ENCODE measurements at regions of chr18 and their contacts with region 1.

Region 1: GRCh38 chr18:72762515-72763122 is 105.2 kb downstream of the NETO1 start:
- DNase-seq: peak in 2 of 9 experiments; percentile 4 to 42
- ATAC-seq: no peak
- H3K4me3 ChIP-seq: no peak overlapping the region
- H3K4me3 Mint-ChIP-seq: no peak overlapping the region
- H3K27ac ChIP-seq: no peak overlapping the region
- H3K27ac Mint-ChIP-seq: no peak overlapping the region
- H3K4me1 ChIP-seq: no peaks in the 10 kb centered on the region
- H3K4me1 Mint-ChIP-seq: no peaks in the 10 kb centered on the region
- H3K27me3 ChIP-seq: no peaks in the 10 kb centered on the region
- H3K27me3 Mint-ChIP-seq: no peaks in the 10 kb centered on the region
- CTCF ChIP-seq: peak; percentile 64

Region 2: GRCh38 chr18:72436401-72436800 is 326.2 kb before region 1 on chr18:
- CTCF ChIA-PET with region 1: no interaction called
- POLR2A ChIA-PET with region 1: no interaction called
- intact Hi-C with region 1: no loop called
- DNase-seq: no peak
- ATAC-seq: no peak
- H3K4me3 ChIP-seq: no peak overlapping the region
- H3K4me3 Mint-ChIP-seq: no peak overlapping the region
- H3K27ac ChIP-seq: no peak overlapping the region
- H3K27ac Mint-ChIP-seq: no peak overlapping the region
- H3K4me1 ChIP-seq: no peaks in the 10 kb centered on the region
- H3K4me1 Mint-ChIP-seq: no peaks in the 10 kb centered on the region
- H3K27me3 ChIP-seq: no peaks in the 10 kb centered on the region
- H3K27me3 Mint-ChIP-seq: no peaks in the 10 kb centered on the region
- CTCF ChIP-seq: no peak

Region 3: DNA sequence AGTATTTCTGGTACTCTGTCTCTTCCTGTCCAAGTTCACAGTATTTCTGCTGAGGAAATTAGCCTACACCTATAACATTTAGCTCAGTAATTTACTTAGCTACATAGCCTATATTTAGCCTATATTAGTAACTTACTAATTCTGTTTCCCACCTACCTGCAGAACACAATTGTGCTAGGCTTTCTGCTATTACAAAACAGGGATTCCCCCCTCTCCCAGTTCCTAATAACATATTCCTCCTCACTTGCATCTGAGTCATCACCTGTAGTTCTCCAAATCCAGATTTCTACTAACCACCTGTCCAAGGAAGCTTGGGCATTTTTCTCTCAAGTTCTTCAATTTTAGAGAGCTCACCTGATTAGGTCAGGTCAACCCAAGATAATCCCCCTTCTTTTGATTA is 10.3 kb after region 1 on chr18:
- CTCF ChIA-PET with region 1: no interaction called
- POLR2A ChIA-PET with region 1: no interaction called
- intact Hi-C with region 1: no loop called
- DNase-seq: no peak
- ATAC-seq: no peak
- H3K4me3 ChIP-seq: no peak overlapping the region
- H3K4me3 Mint-ChIP-seq: no peak overlapping the region
- H3K27ac ChIP-seq: no peak overlapping the region
- H3K27ac Mint-ChIP-seq: no peak overlapping the region
- H3K4me1 ChIP-seq: no peaks in the 10 kb centered on the region
- H3K4me1 Mint-ChIP-seq: no peaks in the 10 kb centered on the region
- H3K27me3 ChIP-seq: no peaks in the 10 kb centered on the region
- H3K27me3 Mint-ChIP-seq: no peaks in the 10 kb centered on the region
- CTCF ChIP-seq: no peak

Region 4: GRCh38 chr18:73842795-73843394 is 1080.3 kb after region 1 on chr18:
- CTCF ChIA-PET with region 1: interaction called, 7 read pairs
- POLR2A ChIA-PET with region 1: no interaction called
- intact Hi-C with region 1: loop called in 1 of 2 experiments (anchors 2 kb)
- DNase-seq: peak in 7 of 9 experiments; percentile 7 to 56 (median 30)
- ATAC-seq: peak; percentile 49
- H3K4me3 ChIP-seq: no peak overlapping the region
- H3K4me3 Mint-ChIP-seq: peak overlapping the region; percentile 78
- H3K27ac ChIP-seq: no peak overlapping the region
- H3K27ac Mint-ChIP-seq: no peak overlapping the region
- H3K4me1 ChIP-seq: no peaks in the 10 kb centered on the region
- H3K4me1 Mint-ChIP-seq: peaks cover 7% of the 10 kb centered on the region
- H3K27me3 ChIP-seq: no peaks in the 10 kb centered on the region
- H3K27me3 Mint-ChIP-seq: peaks cover 2% of the 10 kb centered on the region
- CTCF ChIP-seq: peak; percentile 94

Region 5: DNA sequence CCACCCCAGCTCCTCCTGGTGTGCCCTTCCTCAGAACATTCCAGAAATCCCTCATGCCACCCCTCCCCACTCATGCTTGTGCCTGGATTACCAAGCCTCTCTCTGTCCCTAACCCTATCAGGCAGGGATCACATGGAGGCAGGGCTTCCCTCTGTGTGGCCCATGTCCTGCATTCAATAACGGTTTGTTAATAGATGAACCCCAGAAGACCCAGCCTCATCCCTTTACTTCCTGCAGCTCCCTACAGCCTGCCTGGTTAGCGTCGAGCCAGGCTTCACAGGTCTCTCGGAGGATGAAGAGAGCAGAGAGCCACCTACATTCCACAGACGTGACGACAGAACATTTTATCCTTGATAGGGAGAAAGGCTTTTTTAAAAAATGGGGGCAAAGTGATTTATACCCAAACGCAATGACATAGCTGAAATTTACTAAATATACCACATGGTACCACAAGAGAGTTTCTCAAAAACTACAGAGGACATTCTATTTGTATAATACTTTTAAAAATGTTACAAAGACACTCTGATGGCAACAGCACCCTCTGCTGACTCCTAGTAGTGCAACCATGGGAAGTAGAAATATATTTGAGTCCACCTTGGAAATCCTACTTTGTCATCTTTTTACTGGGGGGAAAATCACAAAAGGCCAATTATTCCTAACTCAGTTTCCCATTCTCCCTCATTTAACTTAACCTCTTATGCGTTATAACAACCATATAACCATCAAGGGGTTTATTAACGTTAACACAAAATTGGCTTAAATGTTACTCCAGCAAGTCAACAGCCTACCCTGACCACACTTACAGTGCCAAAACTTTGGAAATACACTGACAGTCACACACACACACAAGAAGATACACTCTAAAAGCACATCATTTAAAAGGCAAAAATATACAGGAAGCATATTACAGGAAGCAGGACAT is 1354.3 kb after region 1 on chr18:
- CTCF ChIA-PET with region 1: no interaction called
- POLR2A ChIA-PET with region 1: no interaction called
- intact Hi-C with region 1: loop called (anchors 10 kb)
- DNase-seq: peak in 4 of 9 experiments; percentile 14 to 48 (median 24)
- ATAC-seq: no peak
- H3K4me3 ChIP-seq: no peak overlapping the region
- H3K4me3 Mint-ChIP-seq: no peak overlapping the region
- H3K27ac ChIP-seq: no peak overlapping the region
- H3K27ac Mint-ChIP-seq: no peak overlapping the region
- H3K4me1 ChIP-seq: no peaks in the 10 kb centered on the region
- H3K4me1 Mint-ChIP-seq: peaks cover 8% of the 10 kb centered on the region
- H3K27me3 ChIP-seq: no peaks in the 10 kb centered on the region
- H3K27me3 Mint-ChIP-seq: no peaks in the 10 kb centered on the region
- CTCF ChIP-seq: peak; percentile 42